MCF 10A (cell line): ENCODE measurements at regions of chr4 and their contacts with region 1.

Region 1: DNA sequence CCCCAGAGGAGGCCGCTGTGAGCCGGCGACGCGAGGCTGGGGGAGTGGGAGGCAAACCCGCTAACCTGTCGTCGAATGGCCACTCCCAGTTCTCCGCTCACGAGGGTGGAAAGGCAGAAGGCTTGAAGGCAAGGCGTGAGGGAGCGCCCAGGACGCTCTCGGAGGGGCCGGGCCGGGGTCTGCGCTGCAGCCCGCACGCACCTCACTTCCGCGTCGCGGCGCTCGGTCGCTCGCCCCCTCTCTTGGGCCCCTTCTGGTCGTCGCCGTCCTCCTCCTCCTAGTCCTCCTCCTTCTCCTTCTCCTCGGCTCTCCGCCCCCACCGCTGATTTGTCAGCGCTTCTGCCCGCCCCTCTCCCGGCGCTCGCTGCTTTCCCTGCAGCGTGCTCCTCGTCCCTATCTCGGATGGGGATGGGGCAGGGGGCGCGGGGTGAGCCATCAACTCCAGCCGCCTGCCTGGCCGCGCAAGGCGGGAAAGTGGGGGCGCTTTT is at the start of gene SNCA:
- DNase-seq: peak; percentile 84
- H3K4me3 Mint-ChIP-seq: peak within 1 kb of the TSS; percentile 89
- H3K27ac Mint-ChIP-seq: peak within 1 kb of the TSS; percentile 2
- H3K4me1 Mint-ChIP-seq: peaks cover 19% of the 10 kb centered on the region
- H3K27me3 Mint-ChIP-seq: no peaks in the 10 kb centered on the region
- CTCF ChIP-seq: no peak
- total RNA-seq, gene SNCA: 29.1 and 34.8 TPM in 2 replicates

Region 2: GRCh38 chr4:89681215-89681614 is 155.7 kb before region 1 on chr4:
- CTCF ChIA-PET with region 1: no interaction called
- POLR2A ChIA-PET with region 1: interaction called, 11 read pairs
- intact Hi-C with region 1: no loop called
- DNase-seq: peak; percentile 82
- H3K4me3 Mint-ChIP-seq: peak overlapping the region; percentile 91
- H3K27ac Mint-ChIP-seq: peak overlapping the region; percentile 94
- H3K4me1 Mint-ChIP-seq: peaks cover 18% of the 10 kb centered on the region
- H3K27me3 Mint-ChIP-seq: no peaks in the 10 kb centered on the region
- CTCF ChIP-seq: no peak

Region 3: GRCh38 chr4:89752932-89753581 is 83.9 kb before region 1 on chr4:
- CTCF ChIA-PET with region 1: no interaction called
- POLR2A ChIA-PET with region 1: interaction called, 11 read pairs
- intact Hi-C with region 1: loop called (anchors 2 kb)
- DNase-seq: peak; percentile 76
- H3K4me3 Mint-ChIP-seq: peak overlapping the region; percentile 52
- H3K27ac Mint-ChIP-seq: peak overlapping the region; percentile 85
- H3K4me1 Mint-ChIP-seq: peaks cover 23% of the 10 kb centered on the region
- H3K27me3 Mint-ChIP-seq: no peaks in the 10 kb centered on the region
- CTCF ChIP-seq: no peak

Region 4: GRCh38 chr4:89847571-89848325 is 10.8 kb after region 1 on chr4:
- CTCF ChIA-PET with region 1: interaction called, 8 read pairs
- POLR2A ChIA-PET with region 1: interaction called, 17 read pairs
- intact Hi-C with region 1: no loop called
- DNase-seq: no peak
- H3K4me3 Mint-ChIP-seq: no peak overlapping the region
- H3K27ac Mint-ChIP-seq: peak overlapping the region; percentile 63
- H3K4me1 Mint-ChIP-seq: peaks cover 11% of the 10 kb centered on the region
- H3K27me3 Mint-ChIP-seq: no peaks in the 10 kb centered on the region
- CTCF ChIP-seq: no peak

Region 5: DNA sequence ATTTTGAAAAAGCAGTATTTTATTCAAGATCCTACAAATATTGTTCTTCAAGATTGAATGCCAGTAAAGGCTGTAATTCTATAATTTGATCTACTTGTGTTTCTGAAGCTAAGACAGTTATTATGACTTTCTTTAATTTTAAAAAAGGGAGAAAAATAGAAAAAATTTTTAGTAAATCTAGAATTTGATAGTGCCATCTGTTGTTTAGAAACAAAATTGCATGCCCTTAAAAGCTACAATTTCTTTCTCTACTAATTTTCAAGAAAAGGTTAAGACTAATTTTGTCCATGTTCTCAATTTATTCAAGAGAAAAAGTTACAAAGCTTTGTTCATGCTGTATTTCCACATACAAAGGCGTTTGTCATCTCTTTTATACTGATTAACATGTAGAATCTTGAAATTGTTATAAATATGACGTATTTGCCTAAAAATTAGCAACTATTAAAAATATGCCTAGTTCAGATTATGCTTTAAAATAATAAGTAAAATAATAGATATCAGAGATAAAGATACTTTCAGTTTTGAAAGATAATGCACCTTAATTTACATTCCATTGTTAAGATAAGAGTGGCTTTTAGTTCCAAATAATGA is 32.2 kb after region 1 on chr4:
- CTCF ChIA-PET with region 1: interaction called, 7 read pairs
- POLR2A ChIA-PET with region 1: interaction called, 6 read pairs
- intact Hi-C with region 1: loop called (anchors 2 kb)
- DNase-seq: peak; percentile 14
- H3K4me3 Mint-ChIP-seq: no peak overlapping the region
- H3K27ac Mint-ChIP-seq: no peak overlapping the region
- H3K4me1 Mint-ChIP-seq: no peaks in the 10 kb centered on the region
- H3K27me3 Mint-ChIP-seq: no peaks in the 10 kb centered on the region
- CTCF ChIP-seq: peak; percentile 47

Region 6: DNA sequence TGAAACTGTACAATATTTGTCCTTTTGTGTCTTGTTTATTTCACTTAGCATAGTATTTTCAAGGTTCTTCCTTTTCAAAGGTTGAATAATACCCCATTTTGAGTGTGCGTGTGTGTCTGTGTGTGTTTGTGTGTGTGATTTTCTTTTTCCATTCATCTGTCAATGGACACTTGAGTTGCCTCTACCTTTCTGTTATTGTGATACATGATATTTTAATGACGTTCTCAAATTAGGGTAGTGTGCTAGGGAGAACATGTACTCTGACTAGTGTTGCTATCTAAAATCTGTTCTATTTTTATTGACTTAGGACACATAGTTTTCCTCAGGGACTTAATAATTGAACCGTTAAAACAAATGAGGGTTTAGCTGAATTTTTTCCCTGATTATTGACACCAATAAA is 67.6 kb after region 1 on chr4:
- CTCF ChIA-PET with region 1: no interaction called
- POLR2A ChIA-PET with region 1: interaction called, 3 read pairs
- intact Hi-C with region 1: loop called (anchors 5 kb)
- DNase-seq: no peak
- H3K4me3 Mint-ChIP-seq: no peak overlapping the region
- H3K27ac Mint-ChIP-seq: no peak overlapping the region
- H3K4me1 Mint-ChIP-seq: no peaks in the 10 kb centered on the region
- H3K27me3 Mint-ChIP-seq: no peaks in the 10 kb centered on the region
- CTCF ChIP-seq: no peak